ENCODE measurements at regions of chr11 and their contacts with region 1.

Region 1: GRCh38 chr11:16785520-16786128 is 47.2 kb downstream of the C11orf58 start:
- DNase-seq: peak; percentile 73
- H3K4me3 ChIP-seq: no peak overlapping the region
- H3K27ac ChIP-seq: no peak overlapping the region
- H3K4me1 ChIP-seq: peaks cover 49% of the 10 kb centered on the region
- H3K27me3 ChIP-seq: no peaks in the 10 kb centered on the region
- CTCF ChIP-seq: peak; percentile 90 to 95
- POLR2A ChIP-seq: no peak

Region 2: DNA sequence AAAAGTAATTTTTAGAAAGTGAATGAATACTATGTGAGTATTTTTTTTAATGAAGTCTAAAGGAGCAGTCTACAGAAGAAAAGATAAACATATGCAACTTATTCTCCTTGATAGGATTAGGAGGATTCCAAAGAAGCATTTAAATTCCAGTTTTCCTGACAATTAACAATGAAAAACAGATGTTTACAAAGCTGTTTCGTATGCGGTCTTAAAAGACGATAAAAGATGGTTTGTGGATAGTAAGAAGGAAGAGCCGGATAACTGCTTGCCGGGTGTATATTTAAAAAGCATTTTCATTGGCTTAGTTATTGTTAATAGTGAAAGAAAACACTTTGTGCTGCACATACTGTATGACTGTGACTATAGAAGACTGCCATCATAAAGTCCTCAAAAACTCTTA is 167.2 kb before region 1 on chr11:
- CTCF ChIA-PET with region 1: no interaction called
- POLR2A ChIA-PET with region 1: no interaction called
- dilution Hi-C with region 1: no loop called
- intact Hi-C with region 1: no loop called
- DNase-seq: no peak
- H3K4me3 ChIP-seq: no peak overlapping the region
- H3K27ac ChIP-seq: no peak overlapping the region
- H3K4me1 ChIP-seq: peaks cover 6% of the 10 kb centered on the region
- H3K27me3 ChIP-seq: peaks cover 4 to 31% of the 10 kb centered on the region in 2 experiments
- CTCF ChIP-seq: no peak
- POLR2A ChIP-seq: no peak

Region 3: DNA sequence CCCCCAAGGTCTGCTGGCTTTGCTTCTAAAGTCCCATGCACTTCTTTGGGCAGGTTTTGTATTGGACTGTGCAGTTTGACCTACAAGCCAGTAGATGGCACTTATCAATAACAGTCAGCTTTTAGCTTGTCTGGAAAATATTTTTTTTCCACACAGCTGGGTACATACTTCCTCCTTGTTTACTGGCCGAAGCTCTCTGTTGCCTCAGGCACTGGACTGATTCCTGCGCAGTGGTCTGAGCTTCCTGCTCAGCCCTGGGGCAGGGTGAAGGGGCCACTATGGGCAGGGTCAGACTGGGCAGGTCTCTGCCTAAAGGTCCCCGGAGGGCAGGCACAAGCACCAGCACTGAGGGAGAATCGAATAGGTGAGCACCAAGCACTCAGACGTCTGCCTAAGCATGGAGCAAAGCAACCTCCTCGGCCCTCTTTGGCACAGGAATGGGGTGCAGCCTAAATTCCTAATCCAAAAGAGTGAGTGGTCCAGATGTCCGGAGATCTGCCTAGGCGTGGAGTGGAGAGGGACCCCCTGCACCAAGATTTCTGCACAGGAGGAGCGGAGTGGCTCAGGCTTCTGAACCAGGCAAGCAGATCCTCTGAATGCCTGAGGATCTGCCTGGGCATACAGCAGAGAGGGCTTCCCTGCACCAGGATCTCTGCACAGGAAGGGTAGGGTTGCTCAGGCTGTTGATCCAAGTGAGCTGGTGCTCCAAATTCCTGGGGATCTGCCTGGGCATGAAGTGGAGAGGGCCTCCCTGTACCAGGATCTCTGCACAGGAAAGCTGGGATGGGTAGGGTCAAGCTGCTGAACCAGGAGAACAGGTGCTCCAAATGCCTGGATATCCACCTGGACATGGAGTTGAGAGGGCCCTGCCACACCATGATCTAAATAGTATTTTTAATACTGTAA is 153.1 kb before region 1 on chr11:
- CTCF ChIA-PET with region 1: interaction called, 3 read pairs
- POLR2A ChIA-PET with region 1: no interaction called
- dilution Hi-C with region 1: no loop called
- intact Hi-C with region 1: loop called (anchors 2 kb)
- DNase-seq: peak; percentile 8
- H3K4me3 ChIP-seq: no peak overlapping the region
- H3K27ac ChIP-seq: no peak overlapping the region
- H3K4me1 ChIP-seq: no peaks in the 10 kb centered on the region
- H3K27me3 ChIP-seq: peaks cover 0 to 2% of the 10 kb centered on the region in 2 experiments
- CTCF ChIP-seq: peak in 1 of 2 donors; percentile 51
- POLR2A ChIP-seq: no peak

Region 4: GRCh38 chr11:16773981-16774935 is 11.4 kb before region 1 on chr11:
- CTCF ChIA-PET with region 1: interaction called, 15 read pairs
- POLR2A ChIA-PET with region 1: no interaction called
- dilution Hi-C with region 1: no loop called
- intact Hi-C with region 1: no loop called
- DNase-seq: no peak
- H3K4me3 ChIP-seq: no peak overlapping the region
- H3K27ac ChIP-seq: no peak overlapping the region
- H3K4me1 ChIP-seq: no peaks in the 10 kb centered on the region
- H3K27me3 ChIP-seq: peaks cover 0 to 8% of the 10 kb centered on the region in 2 experiments
- CTCF ChIP-seq: no peak
- POLR2A ChIP-seq: no peak

Region 5: DNA sequence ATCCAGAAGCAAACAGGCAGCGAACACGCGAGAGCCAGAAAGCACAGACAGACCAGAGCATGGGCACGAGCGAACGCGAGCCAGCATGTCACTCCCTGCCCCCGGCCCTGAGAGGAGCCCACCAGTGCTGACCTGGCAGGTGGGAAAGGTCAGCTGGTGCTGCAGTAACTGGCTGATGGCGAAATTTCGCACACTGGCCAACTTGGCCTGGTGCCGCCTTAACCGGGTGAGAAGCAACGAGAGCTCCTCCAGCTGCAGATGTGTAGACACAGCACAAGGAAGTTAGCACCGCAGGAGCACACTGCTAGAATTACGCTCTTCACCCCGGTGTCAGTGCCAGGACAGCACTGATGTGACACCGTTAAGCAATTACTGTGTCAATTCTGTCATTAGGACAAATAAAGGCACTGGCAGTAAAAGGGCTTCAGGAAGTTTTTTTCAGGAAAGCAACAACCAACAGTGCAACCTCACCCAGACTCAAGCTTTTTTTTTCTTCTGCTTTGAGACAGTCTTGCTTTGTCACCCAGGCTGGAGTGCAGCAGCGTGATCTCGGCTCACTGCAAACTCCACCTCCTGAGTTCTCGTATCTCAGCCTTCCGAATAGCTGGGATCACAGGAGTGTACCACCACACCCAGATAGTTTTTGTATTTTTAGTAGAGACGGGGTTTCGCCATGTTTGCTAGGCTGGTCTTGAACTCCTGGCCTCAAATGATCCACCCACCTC is 29.6 kb after region 1 on chr11:
- CTCF ChIA-PET with region 1: interaction called, 64 read pairs
- POLR2A ChIA-PET with region 1: no interaction called
- dilution Hi-C with region 1: no loop called
- intact Hi-C with region 1: loop called (anchors 1 kb)
- DNase-seq: no peak
- H3K4me3 ChIP-seq: no peak overlapping the region
- H3K27ac ChIP-seq: no peak overlapping the region
- H3K4me1 ChIP-seq: no peaks in the 10 kb centered on the region
- H3K27me3 ChIP-seq: no peaks in the 10 kb centered on the region
- CTCF ChIP-seq: no peak
- POLR2A ChIP-seq: no peak

Region 6: DNA sequence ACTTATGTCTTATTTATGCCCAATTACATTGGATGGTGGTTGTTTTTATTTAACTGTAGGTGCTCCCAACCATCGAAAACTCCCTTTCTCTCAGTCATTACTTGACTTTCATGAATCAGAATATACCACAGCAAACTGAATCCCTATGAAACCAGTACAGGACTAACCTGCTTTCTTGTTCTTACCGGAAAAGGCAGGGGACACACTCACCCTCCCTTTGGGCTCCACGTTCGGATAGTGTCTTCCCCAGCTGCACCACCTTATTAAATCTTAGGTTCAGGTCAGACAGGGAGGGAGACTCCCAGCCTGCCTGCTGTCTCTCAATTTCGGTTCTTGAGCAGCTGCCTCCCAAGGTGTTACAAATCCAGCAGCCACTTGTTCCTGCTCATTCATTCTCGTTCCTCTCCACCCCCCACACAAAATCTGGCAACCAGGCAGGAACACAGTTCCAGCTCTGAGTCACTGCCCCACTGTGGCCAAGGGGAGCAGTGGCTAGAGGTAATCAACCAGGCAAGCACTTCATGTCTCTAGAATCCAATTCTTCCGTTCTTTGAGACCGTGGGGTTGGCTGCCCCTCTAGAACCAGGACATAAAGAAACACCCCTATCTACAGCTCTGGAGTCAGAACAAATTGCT is 95.6 kb after region 1 on chr11:
- CTCF ChIA-PET with region 1: interaction called, 10 read pairs
- POLR2A ChIA-PET with region 1: no interaction called
- dilution Hi-C with region 1: no loop called
- intact Hi-C with region 1: loop called (anchors 1 kb)
- DNase-seq: no peak
- H3K4me3 ChIP-seq: no peak overlapping the region
- H3K27ac ChIP-seq: no peak overlapping the region
- H3K4me1 ChIP-seq: peaks cover 3% of the 10 kb centered on the region
- H3K27me3 ChIP-seq: peaks cover 0 to 6% of the 10 kb centered on the region in 2 experiments
- CTCF ChIP-seq: peak in 1 of 2 donors; percentile 16
- POLR2A ChIP-seq: no peak

Region 7: DNA sequence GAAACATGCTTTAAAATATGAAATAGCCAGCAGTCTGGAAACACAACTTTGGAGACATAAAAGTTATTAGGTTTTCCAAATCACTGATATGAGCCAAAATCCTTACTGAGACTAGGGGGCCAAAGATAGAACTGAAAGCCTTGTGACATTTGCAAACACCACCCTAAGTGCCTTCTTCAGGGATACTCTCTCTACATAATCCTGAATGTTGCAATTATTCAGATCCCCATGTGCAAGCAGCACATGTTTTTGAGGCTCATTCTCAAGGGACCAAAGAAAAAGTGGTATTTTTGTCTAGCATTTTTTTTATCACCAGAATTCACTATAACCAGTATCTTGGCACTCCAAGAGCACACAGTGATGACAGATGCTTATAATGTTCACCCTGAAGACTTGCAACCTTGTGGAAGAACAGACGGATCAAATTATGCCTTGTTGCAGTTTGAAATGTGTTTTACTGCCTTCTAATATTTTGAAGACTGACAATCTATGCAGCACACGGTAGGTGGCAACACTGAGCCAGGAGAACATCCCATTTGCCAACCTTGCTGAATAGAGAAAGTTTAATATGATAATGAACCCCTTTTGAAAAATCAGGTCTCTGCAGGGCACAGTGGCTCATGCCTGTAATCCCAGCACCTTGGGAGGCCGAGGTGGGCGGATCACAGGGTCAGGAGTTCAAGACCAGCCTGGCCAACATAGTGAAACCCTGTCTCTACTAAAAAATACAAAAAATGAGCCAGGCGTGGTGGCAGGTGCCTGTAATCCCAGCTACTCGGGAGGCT is 150.1 kb after region 1 on chr11:
- CTCF ChIA-PET with region 1: interaction called, 9 read pairs
- POLR2A ChIA-PET with region 1: no interaction called
- dilution Hi-C with region 1: no loop called
- intact Hi-C with region 1: loop called (anchors 1 kb)
- DNase-seq: peak; percentile 41
- H3K4me3 ChIP-seq: no peak overlapping the region
- H3K27ac ChIP-seq: no peak overlapping the region
- H3K4me1 ChIP-seq: no peaks in the 10 kb centered on the region
- H3K27me3 ChIP-seq: peaks cover 0 to 2% of the 10 kb centered on the region in 2 experiments
- CTCF ChIP-seq: peak; percentile 57 to 72
- POLR2A ChIP-seq: no peak

Region 8: DNA sequence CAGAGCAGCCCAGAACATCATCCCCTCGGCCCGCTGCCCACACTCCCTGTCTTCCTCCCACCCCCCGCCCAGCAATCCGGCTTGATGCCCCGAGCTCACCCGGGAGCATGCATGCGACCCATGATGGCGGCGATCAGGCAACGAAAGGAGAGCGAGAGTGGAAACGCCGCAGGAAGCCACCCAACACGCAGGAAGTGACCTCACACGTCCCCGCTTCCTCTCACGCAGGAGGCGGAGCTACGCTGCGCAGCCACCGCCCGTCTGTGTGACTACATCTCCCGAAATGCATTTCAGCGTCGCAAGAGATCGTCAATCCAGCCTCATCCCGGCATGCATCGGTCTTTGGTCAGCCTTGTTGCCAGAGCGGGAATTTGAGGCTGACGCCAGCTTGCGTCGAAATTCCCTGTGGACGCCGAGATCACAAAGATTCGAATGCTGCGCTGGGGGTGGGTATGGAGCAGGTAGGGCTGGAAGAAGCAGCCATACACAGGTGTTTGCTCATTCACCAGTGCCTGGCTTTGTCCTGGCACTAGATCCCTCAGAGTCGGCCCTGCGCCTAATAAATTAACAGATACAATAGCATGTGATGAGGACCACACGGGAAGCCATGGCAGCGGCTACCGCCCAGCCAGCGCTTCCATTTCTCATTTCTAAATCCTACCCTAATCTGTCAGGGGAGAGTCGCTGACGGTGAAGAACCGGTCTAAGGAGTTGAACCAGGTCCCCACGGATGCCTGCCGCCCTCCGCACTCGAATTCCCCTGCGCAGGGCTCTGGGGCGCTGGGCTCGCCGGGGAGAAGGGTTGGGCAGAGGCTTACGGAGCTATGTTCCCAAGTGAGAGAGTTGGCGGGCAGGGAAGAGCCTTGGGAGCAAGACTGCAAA is 292.1 kb after region 1 on chr11 and contains the start of gene RPS13:
- CTCF ChIA-PET with region 1: interaction called, 8 read pairs
- POLR2A ChIA-PET with region 1: no interaction called
- dilution Hi-C with region 1: no loop called
- intact Hi-C with region 1: loop called (anchors 1 kb)
- DNase-seq: peak; percentile 100
- H3K4me3 ChIP-seq: peak within 1 kb of the TSS; percentile 69 to 90 (median 83)
- H3K27ac ChIP-seq: peak within 1 kb of the TSS; percentile 76
- H3K4me1 ChIP-seq: peaks cover 14% of the 10 kb centered on the region
- H3K27me3 ChIP-seq: no peaks in the 10 kb centered on the region
- CTCF ChIP-seq: no peak
- POLR2A ChIP-seq: peak; percentile 99
- total RNA-seq, gene RPS13: 1,051 and 1,169 TPM in 2 replicates